Mammary epithelial cell (primary cell): ENCODE measurements at regions of chr15 and their contacts with region 1.

Region 1: DNA sequence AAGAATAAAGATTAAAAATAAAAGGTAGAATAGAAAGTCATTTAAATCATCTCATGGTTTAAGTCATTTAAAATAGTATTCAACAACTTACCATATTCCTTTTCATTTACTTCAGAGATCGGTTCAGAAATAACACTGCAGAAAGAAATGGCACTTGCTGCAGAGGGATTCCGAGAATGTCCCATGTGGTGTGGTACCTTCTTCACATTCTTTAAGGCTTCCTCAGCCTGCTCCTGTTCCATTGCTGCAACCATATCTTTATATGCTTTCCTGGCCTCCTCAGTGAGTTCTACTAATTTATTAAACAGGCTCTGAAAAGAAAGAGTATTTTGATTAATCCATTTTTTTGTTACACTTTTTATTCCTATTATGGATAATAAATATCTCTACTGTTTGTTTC is 32.6 kb upstream of the SHC4 start:
- DNase-seq: no peak
- H3K4me3 ChIP-seq: no peak overlapping the region
- H3K27ac ChIP-seq: no peak overlapping the region
- H3K4me1 ChIP-seq: no peaks in the 10 kb centered on the region
- H3K27me3 ChIP-seq: no peaks in the 10 kb centered on the region
- CTCF ChIP-seq: no peak

Region 2: DNA sequence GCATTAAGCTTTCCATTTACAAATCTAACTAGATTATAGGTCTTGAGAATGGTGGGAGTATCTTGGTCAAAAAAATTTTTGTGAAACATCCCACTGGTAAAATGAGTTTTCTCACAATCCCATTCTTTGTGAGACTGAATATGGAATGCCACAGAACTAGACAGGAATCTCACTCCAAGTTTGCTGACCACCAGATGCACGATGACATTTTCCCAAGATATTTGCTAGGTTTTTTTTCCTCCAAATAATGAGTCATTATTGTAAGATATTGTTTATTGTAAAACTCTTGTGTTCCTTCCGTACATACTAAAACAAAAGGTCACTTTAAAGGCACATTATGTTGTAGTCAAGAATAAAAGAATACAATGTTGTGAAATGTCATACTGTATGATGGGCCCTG is 105.3 kb after region 1 on chr15:
- CTCF ChIA-PET with region 1: no interaction called
- dilution Hi-C with region 1: loop called (anchors 5 kb)
- in situ Hi-C with region 1: no loop called
- intact Hi-C with region 1: no loop called
- DNase-seq: no peak
- H3K4me3 ChIP-seq: no peak overlapping the region
- H3K27ac ChIP-seq: no peak overlapping the region
- H3K4me1 ChIP-seq: no peaks in the 10 kb centered on the region
- H3K27me3 ChIP-seq: no peaks in the 10 kb centered on the region
- CTCF ChIP-seq: no peak